Right cardiac atrium (tissue), 5 donors: ENCODE measurements at regions of chr4 and their contacts with region 1.

Region 1: GRCh38 chr4:39697740-39698423 is at the start of gene UBE2K:
- DNase-seq: peak; percentile 92 to 97 (median 97)
- ATAC-seq: peak; percentile 99 to 100
- H3K4me3 ChIP-seq: peak within 1 kb of the TSS; percentile 63
- H3K27ac ChIP-seq: peak within 1 kb of the TSS; percentile 92
- H3K4me1 ChIP-seq: no peaks in the 10 kb centered on the region
- H3K27me3 ChIP-seq: no peaks in the 10 kb centered on the region
- total RNA-seq, gene UBE2K: 55.4 to 59.5 (median 57.4) TPM

Region 2: DNA sequence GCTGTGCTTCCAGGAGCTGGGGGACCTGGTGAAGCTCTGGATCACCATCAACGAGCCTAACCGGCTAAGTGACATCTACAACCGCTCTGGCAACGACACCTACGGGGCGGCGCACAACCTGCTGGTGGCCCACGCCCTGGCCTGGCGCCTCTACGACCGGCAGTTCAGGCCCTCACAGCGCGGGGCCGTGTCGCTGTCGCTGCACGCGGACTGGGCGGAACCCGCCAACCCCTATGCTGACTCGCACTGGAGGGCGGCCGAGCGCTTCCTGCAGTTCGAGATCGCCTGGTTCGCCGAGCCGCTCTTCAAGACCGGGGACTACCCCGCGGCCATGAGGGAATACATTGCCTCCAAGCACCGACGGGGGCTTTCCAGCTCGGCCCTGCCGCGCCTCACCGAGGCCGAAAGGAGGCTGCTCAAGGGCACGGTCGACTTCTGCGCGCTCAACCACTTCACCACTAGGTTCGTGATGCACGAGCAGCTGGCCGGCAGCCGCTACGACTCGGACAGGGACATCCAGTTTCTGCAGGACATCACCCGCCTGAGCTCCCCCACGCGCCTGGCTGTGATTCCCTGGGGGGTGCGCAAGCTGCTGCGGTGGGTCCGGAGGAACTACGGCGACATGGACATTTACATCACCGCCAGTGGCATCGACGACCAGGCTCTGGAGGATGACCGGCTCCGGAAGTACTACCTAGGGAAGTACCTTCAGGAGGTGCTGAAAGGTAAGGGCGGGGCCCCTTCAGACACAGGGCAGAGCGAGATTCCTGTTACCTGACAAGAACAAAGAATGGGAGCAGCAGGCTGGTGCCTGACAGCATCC is 250.9 kb before region 1 on chr4:
- intact Hi-C with region 1: no loop called
- DNase-seq: peak; percentile 71 to 87 (median 84)
- ATAC-seq: peak; percentile 87
- H3K4me3 ChIP-seq: peak overlapping the region; percentile 33
- H3K27ac ChIP-seq: no peak overlapping the region
- H3K4me1 ChIP-seq: no peaks in the 10 kb centered on the region
- H3K27me3 ChIP-seq: no peaks in the 10 kb centered on the region

Region 3: DNA sequence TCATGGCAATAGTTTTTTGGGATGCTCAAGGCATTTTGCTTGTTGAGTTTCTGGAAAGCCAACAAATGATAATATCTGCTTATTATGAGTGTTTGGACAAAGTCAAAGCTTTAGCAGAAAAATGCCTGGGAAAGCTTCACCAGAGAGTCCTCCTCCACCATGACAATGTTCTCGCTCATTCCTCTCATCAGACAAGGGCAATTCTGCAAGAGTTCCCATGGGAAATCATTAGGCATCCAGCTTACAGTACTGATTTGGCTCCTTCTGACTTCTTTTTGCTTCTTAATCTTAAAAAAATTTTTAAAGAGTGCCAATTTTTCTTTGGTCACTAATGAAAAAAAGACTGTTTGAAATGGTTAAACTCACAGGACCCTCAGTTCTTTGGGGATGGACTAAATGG is 136.4 kb after region 1 on chr4:
- intact Hi-C with region 1: loop called in 1 of 4 experiments (anchors 10 kb)
- DNase-seq: no peak
- ATAC-seq: peak in 1 of 2 donors; percentile 61
- H3K4me3 ChIP-seq: no peak overlapping the region
- H3K27ac ChIP-seq: no peak overlapping the region
- H3K4me1 ChIP-seq: no peaks in the 10 kb centered on the region
- H3K27me3 ChIP-seq: no peaks in the 10 kb centered on the region

Region 4: DNA sequence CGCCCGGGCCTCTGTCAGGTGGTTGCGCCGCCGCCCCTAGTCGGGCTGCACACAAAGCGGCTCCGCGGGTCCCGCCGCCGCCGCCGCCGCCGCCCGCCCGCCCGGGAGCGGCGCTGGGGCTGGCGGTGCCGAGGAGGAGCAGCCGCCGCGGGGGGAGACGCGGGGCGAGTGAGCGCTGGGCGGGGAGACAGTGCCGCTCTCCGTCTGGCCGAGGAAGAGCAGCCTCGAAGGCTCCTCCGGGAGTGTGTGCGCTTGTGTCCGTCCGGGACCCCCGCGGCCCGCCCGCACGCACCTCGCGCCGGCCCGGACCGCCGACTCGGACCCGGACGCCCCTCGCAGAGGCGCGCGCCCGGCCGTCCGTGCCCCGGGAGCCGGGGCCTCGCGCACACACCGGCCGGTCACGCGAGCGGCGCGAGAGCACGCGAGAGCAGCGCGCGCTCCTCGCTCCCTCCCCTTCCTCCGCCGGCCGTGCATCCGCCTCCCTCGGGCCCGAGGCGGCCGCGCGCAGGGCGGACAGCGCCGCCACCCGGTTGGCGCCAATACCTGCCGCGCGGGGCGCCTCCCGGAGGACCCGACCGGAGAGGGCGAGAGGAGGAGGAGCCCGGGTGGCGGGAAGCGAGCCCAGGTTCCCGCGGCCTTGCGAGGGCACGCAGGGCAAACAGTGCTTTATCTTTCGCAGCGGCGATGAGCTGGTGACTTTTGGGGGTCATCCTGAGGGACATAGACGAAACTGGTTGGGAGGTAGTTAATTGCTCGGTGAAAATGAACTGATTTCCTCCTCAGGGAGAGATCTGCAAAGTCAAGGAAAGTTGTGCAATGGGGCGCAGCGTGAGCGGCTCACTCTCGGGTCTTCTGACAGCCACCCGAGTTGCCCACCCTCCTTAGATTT is 279.9 kb after region 1 on chr4 and contains the start of gene PDS5A:
- intact Hi-C with region 1: loop called (anchors 2 to 10 kb)
- DNase-seq: peak; percentile 89 to 96 (median 95)
- ATAC-seq: peak; percentile 92 to 95
- H3K4me3 ChIP-seq: peak within 1 kb of the TSS; percentile 98
- H3K27ac ChIP-seq: peak within 1 kb of the TSS; percentile 93
- H3K4me1 ChIP-seq: no peaks in the 10 kb centered on the region
- H3K27me3 ChIP-seq: no peaks in the 10 kb centered on the region
- total RNA-seq, gene PDS5A: 30.0 to 37.3 (median 36.5) TPM

Region 5: GRCh38 chr4:40056716-40057585 is 359.1 kb after region 1 on chr4 and contains the start of gene N4BP2:
- intact Hi-C with region 1: loop called in 1 of 4 experiments (anchors 10 kb)
- DNase-seq: peak; percentile 88 to 96 (median 95)
- ATAC-seq: peak; percentile 88 to 90
- H3K4me3 ChIP-seq: peak within 1 kb of the TSS; percentile 74
- H3K27ac ChIP-seq: peak within 1 kb of the TSS; percentile 97
- H3K4me1 ChIP-seq: no peaks in the 10 kb centered on the region
- H3K27me3 ChIP-seq: no peaks in the 10 kb centered on the region
- total RNA-seq, gene N4BP2: 5.6 to 7.3 (median 6.2) TPM

Region 6: GRCh38 chr4:40309250-40309774 is 611.4 kb after region 1 on chr4:
- intact Hi-C with region 1: loop called in 1 of 4 experiments (anchors 10 kb)
- DNase-seq: peak; percentile 87 to 97 (median 93)
- ATAC-seq: peak; percentile 82 to 87
- H3K4me3 ChIP-seq: no peak overlapping the region
- H3K27ac ChIP-seq: no peak overlapping the region
- H3K4me1 ChIP-seq: no peaks in the 10 kb centered on the region
- H3K27me3 ChIP-seq: no peaks in the 10 kb centered on the region